ENCODE measurements at regions of chr1 and their contacts with region 1.

Region 1: GRCh38 chr1:28882009-28882628 is 32.2 kb upstream of the EPB41 start:
- DNase-seq: peak; percentile 87
- ATAC-seq: peak; percentile 67

Region 2: DNA sequence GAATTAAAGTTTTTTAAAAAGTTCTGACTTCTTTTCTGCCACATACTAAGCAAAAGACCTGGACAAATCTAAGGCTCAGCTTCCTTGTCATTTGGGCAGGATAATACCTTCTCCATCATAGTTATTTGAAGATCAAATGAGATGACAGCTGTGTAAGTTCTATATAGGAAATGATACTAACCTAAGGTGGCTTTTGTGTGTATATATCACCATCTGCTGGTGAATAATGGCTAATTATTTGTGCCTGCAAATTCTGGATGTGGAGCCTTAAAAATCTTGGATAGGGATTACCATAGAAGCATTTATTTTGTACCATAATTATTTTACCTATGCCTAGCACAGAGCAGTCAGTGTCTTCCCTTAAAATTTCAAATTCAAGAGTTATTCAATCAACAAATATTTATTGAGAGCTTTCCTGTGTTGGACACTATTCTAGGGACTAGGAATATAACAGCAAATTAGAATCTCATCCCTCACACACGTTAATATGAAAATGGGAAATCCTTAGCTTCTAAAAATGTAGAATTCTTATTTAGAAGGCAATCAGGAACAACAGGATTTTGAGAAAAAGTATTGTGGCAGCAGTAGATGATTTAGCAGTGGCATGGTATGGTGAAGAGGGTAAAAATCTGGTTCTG is 151.8 kb after region 1 on chr1:
- intact Hi-C with region 1: loop called (anchors 5 kb)
- DNase-seq: no peak
- ATAC-seq: peak; percentile 45

Region 3: GRCh38 chr1:29047142-29047541 is 165.0 kb after region 1 on chr1:
- intact Hi-C with region 1: no loop called
- DNase-seq: no peak
- ATAC-seq: no peak

Region 4: GRCh38 chr1:29202584-29203340 is 320.6 kb after region 1 on chr1:
- intact Hi-C with region 1: loop called (anchors 5 kb)
- DNase-seq: peak; percentile 96
- ATAC-seq: peak; percentile 94

Measured in left ventricle myocardium superior (tissue), 1 donor.